ENCODE measurements at regions of chr2 and their contacts with region 1.

Region 1: DNA sequence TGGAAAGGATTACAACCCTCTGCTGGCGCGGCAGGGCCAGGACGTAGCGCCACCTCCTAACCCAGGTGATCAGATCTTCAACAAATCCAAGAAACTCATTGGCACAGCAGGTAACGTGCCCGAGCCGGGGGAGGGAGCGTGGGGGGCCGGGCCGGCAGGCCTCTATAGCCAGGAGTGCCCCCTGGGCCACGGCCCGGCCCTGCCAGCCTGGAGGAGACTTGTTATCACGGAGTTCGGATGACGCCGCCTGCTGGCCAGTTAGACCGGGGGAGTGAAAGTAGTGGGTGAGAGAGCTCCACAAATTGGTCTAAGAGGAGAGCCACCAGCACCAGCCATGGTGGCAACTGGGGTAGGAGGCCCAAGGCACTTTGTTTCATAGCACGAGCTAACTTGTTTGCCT is 8.6 kb upstream of the TMEM214 start:
- DNase-seq: peak; percentile 47 to 87
- H3K4me3 ChIP-seq: no peak overlapping the region
- H3K27ac ChIP-seq: no peak overlapping the region
- H3K4me1 ChIP-seq: peaks cover 0 to 4% (median under 1%) of the 10 kb centered on the region in 4 experiments; a peak in 1 of 7 replicates
- H3K27me3 ChIP-seq: no peaks in the 10 kb centered on the region; a peak in 1 of 7 replicates
- CTCF ChIP-seq: peak; percentile 79 to 81 (median 79)
- EP300 ChIP-seq: no peak
- POLR2A ChIP-seq: no peak
- RAD21 ChIP-seq: peak; percentile 52 to 63

Region 2: GRCh38 chr2:26959331-26959730 is 64.9 kb before region 1 on chr2:
- CTCF ChIA-PET with region 1: interaction called, 416 read pairs
- POLR2A ChIA-PET with region 1: interaction called, 4 read pairs
- DNase-seq: no peak
- H3K4me3 ChIP-seq: no peak overlapping the region
- H3K27ac ChIP-seq: no peak overlapping the region
- H3K4me1 ChIP-seq: peaks cover 0 to 2% (median 0%) of the 10 kb centered on the region in 4 experiments; a peak in 1 of 7 replicates
- H3K27me3 ChIP-seq: no peaks in the 10 kb centered on the region; a peak in 1 of 7 replicates
- CTCF ChIP-seq: no peak
- EP300 ChIP-seq: no peak
- POLR2A ChIP-seq: no peak
- RAD21 ChIP-seq: no peak

Region 3: GRCh38 chr2:26982102-26982742 is 42.0 kb before region 1 on chr2:
- CTCF ChIA-PET with region 1: interaction called, 11 read pairs
- POLR2A ChIA-PET with region 1: no interaction called
- DNase-seq: no peak
- H3K4me3 ChIP-seq: no peak overlapping the region
- H3K27ac ChIP-seq: no peak overlapping the region
- H3K4me1 ChIP-seq: no peaks in the 10 kb centered on the region
- H3K27me3 ChIP-seq: no peaks in the 10 kb centered on the region
- CTCF ChIP-seq: peak in 2 of 3 experiments; percentile 35 to 58; a peak in 3 of 4 replicates
- EP300 ChIP-seq: no peak
- POLR2A ChIP-seq: no peak
- RAD21 ChIP-seq: no peak; a peak in 1 of 4 replicates

Region 4: GRCh38 chr2:27010139-27010538 is 14.0 kb before region 1 on chr2:
- CTCF ChIA-PET with region 1: interaction called, 32 read pairs
- POLR2A ChIA-PET with region 1: interaction called, 5 read pairs
- DNase-seq: no peak
- H3K4me3 ChIP-seq: no peak overlapping the region
- H3K27ac ChIP-seq: no peak overlapping the region
- H3K4me1 ChIP-seq: no peaks in the 10 kb centered on the region
- H3K27me3 ChIP-seq: no peaks in the 10 kb centered on the region; a peak in 1 of 7 replicates
- CTCF ChIP-seq: no peak
- EP300 ChIP-seq: no peak
- POLR2A ChIP-seq: no peak
- RAD21 ChIP-seq: no peak

Region 5: DNA sequence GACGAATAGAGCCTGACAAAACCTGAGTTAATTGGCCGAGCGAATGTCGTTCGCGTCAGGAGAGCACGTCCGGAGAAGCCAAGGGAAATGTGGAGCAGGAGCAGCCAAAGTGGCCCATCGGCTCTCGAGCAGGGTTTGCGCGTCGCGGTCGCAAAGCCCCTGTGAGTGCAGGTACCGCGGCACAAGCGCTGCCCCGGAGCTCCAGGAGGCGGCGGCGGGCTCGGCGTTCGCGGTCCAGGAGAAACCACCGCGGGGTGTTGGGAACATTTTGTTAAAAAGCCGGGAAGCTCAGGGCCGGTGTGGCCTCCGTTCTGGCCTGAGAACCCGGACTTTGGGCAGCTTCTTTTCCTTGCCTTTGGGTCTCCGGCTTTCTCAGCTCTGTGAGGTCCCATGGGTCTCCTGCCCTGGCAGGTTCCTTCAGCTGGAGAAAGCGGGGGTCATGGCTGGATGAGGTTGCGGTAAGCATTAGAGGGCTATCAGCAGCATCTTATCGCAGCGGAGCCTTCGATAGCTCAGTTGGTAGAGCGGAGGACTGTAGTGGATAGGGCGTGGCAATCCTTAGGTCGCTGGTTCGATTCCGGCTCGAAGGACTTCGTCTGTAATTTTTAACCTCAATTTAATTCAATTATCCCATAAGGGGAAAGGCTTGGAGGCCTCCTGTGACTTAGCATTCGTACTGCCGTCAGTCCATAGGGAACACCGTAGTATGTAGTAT is 26.2 kb after region 1 on chr2:
- CTCF ChIA-PET with region 1: interaction called, 12 read pairs
- POLR2A ChIA-PET with region 1: interaction called, 5 read pairs
- DNase-seq: peak; percentile 91 to 98
- H3K4me3 ChIP-seq: peak overlapping the region; percentile 80 to 88 (median 87)
- H3K27ac ChIP-seq: peak overlapping the region; percentile 64; the same call in 1 of the 2 replicates
- H3K4me1 ChIP-seq: no peaks in the 10 kb centered on the region; a peak in 4 of 7 replicates
- H3K27me3 ChIP-seq: no peaks in the 10 kb centered on the region
- CTCF ChIP-seq: peak in 2 of 3 experiments; percentile 11 to 12; a peak in 2 of 4 replicates
- EP300 ChIP-seq: no peak
- POLR2A ChIP-seq: peak in 1 of 2 experiments; percentile 73; a peak in 2 of 3 replicates
- RAD21 ChIP-seq: no peak; a peak in 1 of 4 replicates

Region 6: DNA sequence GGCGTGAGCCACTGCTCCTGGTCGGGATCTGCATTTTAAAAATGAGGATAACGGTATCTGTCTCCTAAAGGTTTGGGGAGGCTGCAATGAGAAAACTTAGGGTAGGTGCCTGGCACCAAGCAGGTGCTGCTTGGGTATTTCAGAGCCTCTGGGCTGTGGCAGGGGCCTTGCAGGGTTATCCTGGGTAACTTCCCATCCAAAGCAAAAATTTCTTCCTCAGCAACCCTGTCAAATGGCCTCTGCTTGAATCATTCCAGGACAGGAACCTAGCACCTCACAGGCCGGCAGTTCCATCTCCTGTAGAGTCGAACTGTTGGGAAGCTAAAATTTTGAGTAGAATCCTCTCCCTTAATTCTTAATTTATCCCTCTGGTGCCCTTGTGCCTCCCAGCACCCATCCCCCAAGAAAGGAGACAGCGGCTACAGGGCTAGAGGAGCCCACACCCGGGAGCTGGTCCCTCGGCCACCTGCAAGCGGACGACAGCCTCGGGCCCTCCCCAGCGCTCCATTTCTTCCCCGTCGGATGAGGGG is 93.9 kb after region 1 on chr2:
- CTCF ChIA-PET with region 1: no interaction called
- POLR2A ChIA-PET with region 1: no interaction called
- DNase-seq: no peak
- H3K4me3 ChIP-seq: peak overlapping the region; percentile 40 to 68 (median 52)
- H3K27ac ChIP-seq: no peak overlapping the region
- H3K4me1 ChIP-seq: peaks cover 0 to 12% (median 7%) of the 10 kb centered on the region in 4 experiments; a peak in 5 of 7 replicates
- H3K27me3 ChIP-seq: peaks cover 8 to 56% (median 42%) of the 10 kb centered on the region in 4 experiments
- CTCF ChIP-seq: no peak
- EP300 ChIP-seq: no peak
- POLR2A ChIP-seq: no peak
- RAD21 ChIP-seq: no peak

Measured in H1 (cell line).